K562 (cell line): ENCODE measurements at regions of chr4 and their contacts with region 1.

Region 1: DNA sequence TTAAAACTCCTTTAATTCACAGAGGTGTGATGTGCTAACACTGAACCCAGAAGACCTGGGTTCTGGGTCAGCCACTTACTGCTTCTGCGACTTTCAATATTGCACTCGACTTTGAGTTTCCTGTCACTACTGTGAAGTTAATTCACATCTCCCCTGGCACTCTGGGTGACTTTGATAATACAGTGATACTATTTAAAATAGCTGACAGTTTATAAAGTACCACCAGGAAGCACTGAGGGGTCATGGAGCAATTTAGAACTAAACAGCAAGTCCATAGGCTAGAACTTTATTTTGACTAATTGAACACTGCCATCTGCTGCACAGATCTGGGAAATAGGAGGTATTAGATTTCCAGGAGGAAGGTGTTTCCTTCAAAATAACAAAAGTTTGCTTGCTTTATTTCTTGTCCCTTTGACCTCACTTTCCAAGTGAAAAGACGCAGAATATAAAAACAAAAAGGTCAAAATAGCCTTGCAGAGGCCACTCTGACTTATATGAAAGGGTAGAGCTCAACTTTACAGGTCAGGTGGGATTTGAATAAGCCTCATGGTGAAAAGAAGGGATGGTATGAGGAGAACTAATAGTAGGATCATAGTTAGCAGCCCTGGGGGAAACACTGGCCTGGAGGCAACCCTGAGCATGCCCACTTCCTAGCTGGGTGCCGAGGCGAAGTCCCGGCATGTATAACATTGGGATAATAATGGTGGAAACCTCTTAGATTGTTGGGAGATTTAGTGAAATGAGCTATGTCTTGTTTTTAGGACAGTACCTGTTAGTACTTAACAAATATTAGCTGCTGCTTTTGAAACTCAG is 53.4 kb downstream of the ZNF518B start:
- DNase-seq: peak; percentile 33 to 79 (median 48)
- ATAC-seq: peak; percentile 94
- H3K4me3 ChIP-seq: no peak overlapping the region
- H3K27ac ChIP-seq: peak overlapping the region; percentile 61
- H3K4me1 ChIP-seq: peaks cover 0 to 16% of the 10 kb centered on the region in 2 experiments; a peak in 3 of 5 replicates
- H3K27me3 ChIP-seq: no peaks in the 10 kb centered on the region
- CTCF ChIP-seq: peak; percentile 65 to 87 (median 74)
- EP300 ChIP-seq: no peak; the same call in 1 of the 2 replicates
- POLR2A ChIP-seq: no peak
- RAD21 ChIP-seq: peak; percentile 98 to 99

Region 2: DNA sequence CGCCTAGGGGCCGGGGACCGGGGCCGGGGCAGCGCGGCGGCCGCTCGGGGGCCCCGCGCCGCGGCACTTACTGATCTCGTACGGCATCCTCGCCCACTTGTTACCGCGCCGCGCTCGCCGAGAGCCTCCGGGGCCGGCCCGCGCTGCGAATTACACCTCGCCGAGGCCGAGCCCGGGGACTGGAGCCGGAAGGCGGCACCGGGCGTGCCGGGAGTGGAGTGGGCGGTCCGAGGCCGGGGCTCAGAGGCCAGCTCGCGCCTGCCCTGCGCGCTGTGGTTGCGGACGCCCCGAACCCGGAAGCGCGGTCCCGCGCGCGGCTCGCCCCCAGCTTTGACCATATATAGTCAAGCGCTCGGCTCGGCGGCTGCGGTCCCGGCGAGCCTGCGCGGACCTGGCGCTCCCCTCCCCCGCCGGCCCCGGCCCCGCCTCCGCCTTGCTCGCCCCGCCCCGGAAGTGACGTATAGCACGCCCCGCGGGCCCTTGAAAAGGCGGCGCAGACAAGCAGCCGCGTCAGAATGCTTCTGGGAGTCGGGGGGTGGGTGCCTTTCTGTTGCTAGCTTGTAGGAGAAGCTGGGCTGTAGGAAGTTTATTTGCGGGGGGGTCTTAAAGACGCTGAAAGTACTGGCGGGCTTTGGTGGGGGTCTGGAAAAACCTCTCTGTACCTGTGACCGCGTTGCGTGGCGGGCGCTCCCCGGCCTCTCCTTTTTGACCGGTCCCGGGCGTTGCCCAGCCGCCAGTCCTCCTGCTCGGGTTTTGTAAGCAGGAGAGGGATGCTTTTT is 287.1 kb before region 1 on chr4 and contains the start of gene WDR1:
- CTCF ChIA-PET with region 1: no interaction called
- POLR2A ChIA-PET with region 1: interaction called, 14 read pairs
- in situ Hi-C with region 1: no loop called
- intact Hi-C with region 1: no loop called
- DNase-seq: peak; percentile 91 to 98 (median 92)
- ATAC-seq: peak; percentile 95
- H3K4me3 ChIP-seq: peak within 1 kb of the TSS; percentile 72
- H3K27ac ChIP-seq: peak within 1 kb of the TSS; percentile 89
- H3K4me1 ChIP-seq: peaks cover 19 to 24% of the 10 kb centered on the region in 2 experiments
- H3K27me3 ChIP-seq: no peaks in the 10 kb centered on the region
- CTCF ChIP-seq: no peak
- EP300 ChIP-seq: no peak
- POLR2A ChIP-seq: peak; percentile 99
- RAD21 ChIP-seq: no peak; a peak in 2 of 4 replicates
- polyA plus RNA-seq, gene WDR1: 16.1 to 23.0 TPM

Region 3: DNA sequence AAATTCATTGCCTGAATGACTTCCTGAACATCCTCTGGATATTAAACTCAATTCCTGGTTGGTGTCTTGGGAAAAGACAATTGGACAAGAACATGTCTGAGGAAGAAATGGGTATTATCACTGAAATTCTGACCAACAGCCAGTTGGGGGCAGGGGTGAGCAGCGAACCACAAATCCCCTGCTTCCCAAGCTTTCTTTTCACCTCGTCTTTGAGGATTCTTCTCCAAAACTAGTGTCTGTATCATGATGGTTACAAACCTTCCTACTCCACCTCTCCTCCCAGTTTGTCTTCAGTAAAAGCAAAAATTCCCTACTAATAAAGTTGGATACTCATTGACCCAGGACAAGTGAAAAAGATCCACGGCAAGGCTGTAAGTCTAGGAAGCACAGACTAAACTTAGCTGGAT is 239.0 kb before region 1 on chr4:
- CTCF ChIA-PET with region 1: interaction called, 36 read pairs
- POLR2A ChIA-PET with region 1: interaction called, 4 read pairs
- in situ Hi-C with region 1: loop called (anchors 5 kb)
- intact Hi-C with region 1: loop called (anchors 1 kb)
- DNase-seq: peak; percentile 68 to 86 (median 72)
- ATAC-seq: peak; percentile 64
- H3K4me3 ChIP-seq: no peak overlapping the region
- H3K27ac ChIP-seq: peak overlapping the region; percentile 15; the same call in 1 of the 3 replicates
- H3K4me1 ChIP-seq: peaks cover 0 to 60% of the 10 kb centered on the region in 2 experiments; a peak in 4 of 5 replicates
- H3K27me3 ChIP-seq: no peaks in the 10 kb centered on the region
- CTCF ChIP-seq: peak; percentile 72 to 88 (median 83)
- EP300 ChIP-seq: no peak; the same call in 1 of the 2 replicates
- POLR2A ChIP-seq: no peak
- RAD21 ChIP-seq: peak; percentile 89 to 96

Region 4: GRCh38 chr4:10186228-10187214 is 217.3 kb before region 1 on chr4:
- CTCF ChIA-PET with region 1: no interaction called
- POLR2A ChIA-PET with region 1: interaction called, 4 read pairs
- in situ Hi-C with region 1: no loop called
- intact Hi-C with region 1: loop called (anchors 1 kb)
- DNase-seq: peak; percentile 60 to 81 (median 65)
- ATAC-seq: peak; percentile 67
- H3K4me3 ChIP-seq: no peak overlapping the region
- H3K27ac ChIP-seq: peak overlapping the region; percentile 100
- H3K4me1 ChIP-seq: peaks cover 27 to 87% of the 10 kb centered on the region in 2 experiments
- H3K27me3 ChIP-seq: no peaks in the 10 kb centered on the region
- CTCF ChIP-seq: peak; percentile 60 to 78 (median 75)
- EP300 ChIP-seq: peak; percentile 54
- POLR2A ChIP-seq: no peak
- RAD21 ChIP-seq: peak; percentile 64 to 68

Region 5: DNA sequence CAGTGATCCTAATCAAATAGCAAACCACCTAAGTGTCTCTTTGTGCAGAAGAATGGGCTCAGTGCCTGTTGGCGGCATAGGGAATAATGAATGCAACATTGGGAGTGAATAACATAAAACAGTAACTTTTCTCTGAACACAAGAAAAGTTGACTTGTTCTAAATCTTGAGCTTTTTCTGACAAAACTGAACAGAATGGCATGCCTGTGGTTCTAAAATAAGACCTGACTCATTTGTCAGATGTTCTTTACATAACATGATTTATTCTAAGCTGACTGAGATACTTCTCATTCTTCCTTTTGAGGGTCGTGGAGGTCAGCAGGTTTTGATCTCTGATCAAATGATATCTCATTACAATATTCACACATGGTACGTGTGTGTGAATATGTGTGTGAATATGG is 121.8 kb before region 1 on chr4:
- CTCF ChIA-PET with region 1: no interaction called
- POLR2A ChIA-PET with region 1: no interaction called
- in situ Hi-C with region 1: no loop called
- intact Hi-C with region 1: loop called (anchors 5 kb)
- DNase-seq: no peak
- ATAC-seq: no peak
- H3K4me3 ChIP-seq: no peak overlapping the region
- H3K27ac ChIP-seq: no peak overlapping the region
- H3K4me1 ChIP-seq: peaks cover 0 to 24% of the 10 kb centered on the region in 2 experiments; a peak in 3 of 5 replicates
- H3K27me3 ChIP-seq: no peaks in the 10 kb centered on the region
- CTCF ChIP-seq: no peak
- EP300 ChIP-seq: no peak
- POLR2A ChIP-seq: no peak
- RAD21 ChIP-seq: no peak

Region 6: GRCh38 chr4:10384974-10385373 is 18.9 kb before region 1 on chr4:
- CTCF ChIA-PET with region 1: no interaction called
- POLR2A ChIA-PET with region 1: interaction called, 3 read pairs
- in situ Hi-C with region 1: no loop called
- intact Hi-C with region 1: loop called (anchors 1 kb)
- DNase-seq: no peak
- ATAC-seq: peak; percentile 34; the same call in 1 of the 3 replicates
- H3K4me3 ChIP-seq: no peak overlapping the region
- H3K27ac ChIP-seq: no peak overlapping the region
- H3K4me1 ChIP-seq: peaks cover 4 to 18% of the 10 kb centered on the region in 2 experiments; a peak in 4 of 5 replicates
- H3K27me3 ChIP-seq: no peaks in the 10 kb centered on the region
- CTCF ChIP-seq: no peak
- EP300 ChIP-seq: no peak
- POLR2A ChIP-seq: no peak
- RAD21 ChIP-seq: no peak

Region 7: DNA sequence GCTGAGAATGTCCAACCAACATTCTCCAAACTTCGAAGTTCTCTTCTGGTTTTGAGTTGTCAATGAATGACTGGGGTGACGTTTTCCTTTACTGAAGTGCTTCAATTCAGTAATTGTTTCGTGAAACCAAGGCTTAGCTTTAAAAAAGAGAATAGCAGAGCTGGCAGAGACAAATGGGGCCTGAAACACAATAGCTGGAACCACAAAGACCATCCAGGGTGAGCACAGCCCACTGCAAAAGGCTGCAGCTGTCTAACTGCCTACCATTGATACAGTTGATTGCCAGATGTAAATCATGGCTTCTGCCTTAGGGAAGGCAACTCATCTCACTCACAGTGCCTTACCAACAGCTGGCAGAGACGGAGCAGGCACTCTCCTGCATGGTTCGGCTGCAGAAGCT is 132.1 kb after region 1 on chr4:
- CTCF ChIA-PET with region 1: interaction called, 4 read pairs
- POLR2A ChIA-PET with region 1: no interaction called
- in situ Hi-C with region 1: no loop called
- intact Hi-C with region 1: loop called (anchors 5 kb)
- DNase-seq: no peak
- ATAC-seq: no peak
- H3K4me3 ChIP-seq: no peak overlapping the region
- H3K27ac ChIP-seq: no peak overlapping the region
- H3K4me1 ChIP-seq: no peaks in the 10 kb centered on the region
- H3K27me3 ChIP-seq: peaks cover 0 to 5% of the 10 kb centered on the region in 2 experiments; a peak in 2 of 5 replicates
- CTCF ChIP-seq: no peak
- EP300 ChIP-seq: no peak
- POLR2A ChIP-seq: no peak
- RAD21 ChIP-seq: no peak